Activated CD8-positive, alpha-beta memory T cell treated with anti-CD3 and anti-CD28 coated beads, Interleukin-2, amount 10 ng/mL, durations not matched to agents 7 days and 5 days (primary cell): ENCODE measurements at regions of chr7 and their contacts with region 1.

Region 1: GRCh38 chr7:2698581-2699288 is 10.7 kb downstream of the AMZ1 start:
- DNase-seq: peak; percentile 96
- ATAC-seq: peak; percentile 90
- H3K4me3 Mint-ChIP-seq: peak overlapping the region; percentile 47
- H3K27ac Mint-ChIP-seq: peak overlapping the region; percentile 82
- H3K4me1 Mint-ChIP-seq: peaks cover 36% of the 10 kb centered on the region
- H3K27me3 Mint-ChIP-seq: peaks cover 39% of the 10 kb centered on the region

Region 2: DNA sequence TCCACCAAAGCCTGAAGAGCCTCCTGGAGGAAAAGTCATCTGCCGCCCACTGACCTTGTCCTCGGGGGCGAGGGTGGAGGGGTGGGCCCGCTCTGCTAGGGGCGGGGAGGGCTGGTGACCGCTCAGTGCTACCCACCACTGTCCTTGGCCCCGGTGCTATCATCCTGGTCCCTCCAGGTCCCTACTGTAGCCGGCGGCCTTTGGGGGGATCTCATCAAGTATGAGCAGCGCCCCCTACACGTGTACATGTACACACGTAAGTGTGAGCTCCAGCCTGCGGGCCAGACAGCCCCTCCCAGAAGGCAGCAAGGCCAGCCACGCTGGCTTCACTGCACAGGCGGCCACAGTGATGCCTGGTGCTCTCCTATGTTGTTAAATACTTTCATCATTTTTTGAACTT is 47.4 kb before region 1 on chr7:
- CTCF ChIA-PET with region 1: no interaction called
- DNase-seq: no peak
- ATAC-seq: no peak
- H3K4me3 Mint-ChIP-seq: no peak overlapping the region
- H3K27ac Mint-ChIP-seq: no peak overlapping the region
- H3K4me1 Mint-ChIP-seq: peaks cover 5% of the 10 kb centered on the region
- H3K27me3 Mint-ChIP-seq: no peaks in the 10 kb centered on the region

Region 3: DNA sequence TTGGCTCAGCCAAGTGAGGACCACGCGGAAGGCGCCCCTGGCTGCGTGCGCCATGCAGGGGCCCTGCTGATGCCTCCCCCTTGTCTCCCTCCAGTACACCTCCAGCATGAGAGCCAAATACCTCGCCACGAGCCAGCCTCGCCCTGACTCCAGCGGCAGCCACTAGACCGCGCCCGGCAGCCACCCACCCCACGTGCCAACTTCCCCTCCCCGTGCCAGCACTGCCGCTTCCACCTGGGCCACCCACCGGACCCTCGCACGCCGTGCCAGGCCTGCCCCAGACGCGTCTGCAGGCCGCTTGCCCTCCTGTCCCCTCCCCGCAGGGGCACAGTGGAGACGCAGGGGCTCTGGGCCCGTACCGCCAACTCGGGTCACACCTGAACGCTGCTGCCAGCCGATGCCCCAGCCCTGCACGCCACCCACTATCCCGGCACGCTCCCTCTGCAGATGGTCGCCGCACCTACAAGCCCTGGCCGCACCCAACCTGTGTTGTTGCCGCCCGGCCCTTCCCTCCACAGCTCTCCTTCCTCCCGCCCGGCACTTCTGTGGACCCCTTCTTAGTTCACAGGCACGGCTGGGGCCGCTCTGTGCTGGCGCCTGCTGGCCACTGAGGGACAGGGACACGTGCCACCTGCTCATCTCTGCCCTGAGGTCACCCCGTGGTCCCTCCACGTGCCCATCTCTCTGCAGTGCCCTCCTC is 37.0 kb before region 1 on chr7:
- CTCF ChIA-PET with region 1: no interaction called
- DNase-seq: no peak
- ATAC-seq: no peak
- H3K4me3 Mint-ChIP-seq: no peak overlapping the region
- H3K27ac Mint-ChIP-seq: no peak overlapping the region
- H3K4me1 Mint-ChIP-seq: peaks cover 6% of the 10 kb centered on the region
- H3K27me3 Mint-ChIP-seq: peaks cover 3% of the 10 kb centered on the region

Region 4: GRCh38 chr7:2680792-2681490 is 17.8 kb before region 1 on chr7:
- CTCF ChIA-PET with region 1: interaction called, 12 read pairs
- DNase-seq: peak; percentile 64
- ATAC-seq: peak; percentile 60
- H3K4me3 Mint-ChIP-seq: no peak overlapping the region
- H3K27ac Mint-ChIP-seq: no peak overlapping the region
- H3K4me1 Mint-ChIP-seq: no peaks in the 10 kb centered on the region
- H3K27me3 Mint-ChIP-seq: peaks cover 32% of the 10 kb centered on the region

Region 5: DNA sequence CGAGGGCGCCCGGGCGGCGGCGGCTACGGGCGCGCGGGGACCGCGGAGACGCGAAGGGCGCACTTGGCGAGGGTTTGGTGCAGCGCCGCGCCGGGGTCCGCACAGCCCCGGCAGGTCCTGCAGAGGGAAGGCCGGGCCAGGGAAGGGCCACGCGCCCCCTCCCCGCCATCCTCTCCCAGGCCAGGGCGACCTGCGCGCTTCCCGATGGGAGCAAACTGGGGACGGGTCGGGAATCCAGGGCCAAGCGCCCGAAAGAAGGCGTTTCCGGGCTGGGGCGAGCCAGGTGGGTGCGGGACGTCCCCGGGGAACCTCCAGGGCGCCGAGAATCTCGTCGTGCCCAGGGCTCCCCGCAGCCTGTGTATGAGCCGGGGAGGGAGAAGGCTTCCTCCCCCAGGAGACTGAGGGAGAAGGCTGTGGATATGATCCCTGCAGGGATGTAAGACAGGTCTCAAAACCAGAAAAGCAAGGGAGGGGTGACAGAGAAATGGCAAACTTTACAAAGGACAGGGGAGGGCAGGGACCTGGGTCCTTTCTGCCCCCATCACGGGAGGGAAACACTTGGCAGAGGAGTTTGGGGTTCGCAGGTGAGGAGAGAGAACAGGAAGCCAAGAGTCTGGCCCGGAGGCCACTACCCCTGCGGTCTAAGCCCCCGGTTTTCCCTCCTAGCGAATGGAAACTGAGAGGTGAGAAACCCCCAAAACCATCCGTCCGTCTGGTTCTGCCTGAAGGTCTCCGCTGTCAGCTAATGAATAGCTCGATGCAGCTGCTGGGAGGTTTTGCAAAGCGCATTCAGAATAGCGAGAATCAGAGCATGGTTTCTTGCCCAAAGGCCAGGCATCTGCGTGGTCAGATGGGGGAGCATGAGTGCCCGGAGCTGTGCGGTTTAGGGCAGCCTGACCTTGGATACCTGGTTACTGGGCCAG is 10.1 kb before region 1 on chr7:
- CTCF ChIA-PET with region 1: interaction called, 15 read pairs
- DNase-seq: no peak
- ATAC-seq: peak; percentile 42
- H3K4me3 Mint-ChIP-seq: peak overlapping the region; percentile 53
- H3K27ac Mint-ChIP-seq: no peak overlapping the region
- H3K4me1 Mint-ChIP-seq: peaks cover 32% of the 10 kb centered on the region
- H3K27me3 Mint-ChIP-seq: peaks cover 72% of the 10 kb centered on the region

Region 6: GRCh38 chr7:2720582-2721491 is 22.1 kb after region 1 on chr7:
- CTCF ChIA-PET with region 1: interaction called, 19 read pairs
- DNase-seq: peak; percentile 91
- ATAC-seq: peak; percentile 85
- H3K4me3 Mint-ChIP-seq: no peak overlapping the region
- H3K27ac Mint-ChIP-seq: peak overlapping the region; percentile 3
- H3K4me1 Mint-ChIP-seq: peaks cover 39% of the 10 kb centered on the region
- H3K27me3 Mint-ChIP-seq: no peaks in the 10 kb centered on the region

Region 7: GRCh38 chr7:2844165-2844898 is 145.6 kb after region 1 on chr7 and contains the start of gene GNA12:
- CTCF ChIA-PET with region 1: no interaction called
- DNase-seq: peak; percentile 99
- ATAC-seq: peak; percentile 97
- H3K4me3 Mint-ChIP-seq: peak within 1 kb of the TSS; percentile 76
- H3K27ac Mint-ChIP-seq: peak within 1 kb of the TSS; percentile 75
- H3K4me1 Mint-ChIP-seq: peaks cover 30% of the 10 kb centered on the region
- H3K27me3 Mint-ChIP-seq: no peaks in the 10 kb centered on the region
- total RNA-seq, gene GNA12: 14.4 to 18.6 TPM

Region 8: DNA sequence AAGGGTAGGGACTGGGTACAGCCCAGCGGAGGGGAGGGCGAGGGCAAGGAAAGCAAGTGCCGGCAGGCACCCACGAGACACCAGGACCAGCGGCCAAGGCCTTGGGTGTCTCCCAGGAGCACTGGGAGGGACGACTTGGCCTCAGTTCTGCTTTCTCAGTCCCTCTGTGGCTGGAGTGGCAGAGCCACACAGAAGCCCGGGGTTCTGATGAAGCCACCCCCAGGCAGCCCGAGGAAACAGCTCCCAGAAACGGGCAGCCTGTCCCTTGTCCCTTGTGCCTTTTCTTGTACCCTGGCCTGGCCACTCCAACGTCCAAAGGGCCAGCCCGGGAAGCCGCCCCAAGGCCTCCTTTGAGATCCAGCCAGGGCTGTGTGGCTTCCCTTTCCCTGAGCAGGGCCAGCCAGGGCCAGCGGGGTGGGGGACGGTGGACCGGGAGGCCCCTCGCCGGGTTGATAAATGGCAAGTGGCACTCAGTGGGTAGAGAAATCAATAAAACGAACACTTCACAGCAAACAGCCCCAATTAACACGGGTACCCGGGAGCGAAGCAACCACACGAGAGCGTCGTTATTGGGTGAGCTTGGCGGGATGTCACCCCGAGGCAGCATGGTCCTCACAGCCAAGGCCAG is 215.1 kb after region 1 on chr7:
- CTCF ChIA-PET with region 1: no interaction called
- DNase-seq: no peak
- ATAC-seq: no peak
- H3K4me3 Mint-ChIP-seq: no peak overlapping the region
- H3K27ac Mint-ChIP-seq: no peak overlapping the region
- H3K4me1 Mint-ChIP-seq: no peaks in the 10 kb centered on the region
- H3K27me3 Mint-ChIP-seq: no peaks in the 10 kb centered on the region